Activated CD8-positive, alpha-beta T cell treated with anti-CD3 and anti-CD28 coated beads for 36 hours (primary cell): ENCODE measurements at regions of chr6 and their contacts with region 1.

Region 1: GRCh38 chr6:3410385-3411360 is 46.2 kb downstream of the SLC22A23 start:
- DNase-seq: peak; percentile 80
- ATAC-seq: peak; percentile 66
- H3K4me3 Mint-ChIP-seq: no peak overlapping the region
- H3K27ac Mint-ChIP-seq: no peak overlapping the region
- H3K4me1 Mint-ChIP-seq: peaks cover 4% of the 10 kb centered on the region
- H3K27me3 Mint-ChIP-seq: no peaks in the 10 kb centered on the region
- CTCF ChIP-seq: peak; percentile 75

Region 2: GRCh38 chr6:3456755-3457466 is 46.2 kb after region 1 on chr6 and contains the start of gene SLC22A23:
- CTCF ChIA-PET with region 1: interaction called, 4 read pairs
- POLR2A ChIA-PET with region 1: no interaction called
- intact Hi-C with region 1: loop called (anchors 5 kb)
- DNase-seq: peak; percentile 57
- ATAC-seq: peak; percentile 72
- H3K4me3 Mint-ChIP-seq: peak within 1 kb of the TSS; percentile 61
- H3K27ac Mint-ChIP-seq: no peak within 1 kb of the TSS
- H3K4me1 Mint-ChIP-seq: peaks cover 9% of the 10 kb centered on the region
- H3K27me3 Mint-ChIP-seq: peaks cover 27% of the 10 kb centered on the region
- CTCF ChIP-seq: peak; percentile 84
- total RNA-seq, gene SLC22A23: 0.16 to 0.34 TPM